ENCODE measurements at regions of chr3 and their contacts with region 1.

Region 1: GRCh38 chr3:71406972-71407810 is 176.3 kb downstream of the FOXP1 start:
- DNase-seq: no peak
- H3K4me3 ChIP-seq: no peak overlapping the region
- H3K27ac ChIP-seq: no peak overlapping the region
- H3K4me1 ChIP-seq: peaks cover 0 to 6% of the 10 kb centered on the region in 2 donors
- H3K27me3 ChIP-seq: no peaks in the 10 kb centered on the region
- CTCF ChIP-seq: no peak
- POLR2A ChIP-seq: no peak

Region 2: GRCh38 chr3:71310359-71310979 is 96.7 kb before region 1 on chr3:
- intact Hi-C with region 1: loop called (anchors 10 kb)
- DNase-seq: peak; percentile 9 to 10
- H3K4me3 ChIP-seq: no peak overlapping the region
- H3K27ac ChIP-seq: peak overlapping the region in 1 of 3 donors; percentile 56
- H3K4me1 ChIP-seq: peaks cover 0 to 6% of the 10 kb centered on the region in 2 donors
- H3K27me3 ChIP-seq: no peaks in the 10 kb centered on the region
- CTCF ChIP-seq: peak in 1 of 6 experiments; percentile 9
- POLR2A ChIP-seq: no peak